ENCODE measurements at regions of chr4 and their contacts with region 1.

Region 1: DNA sequence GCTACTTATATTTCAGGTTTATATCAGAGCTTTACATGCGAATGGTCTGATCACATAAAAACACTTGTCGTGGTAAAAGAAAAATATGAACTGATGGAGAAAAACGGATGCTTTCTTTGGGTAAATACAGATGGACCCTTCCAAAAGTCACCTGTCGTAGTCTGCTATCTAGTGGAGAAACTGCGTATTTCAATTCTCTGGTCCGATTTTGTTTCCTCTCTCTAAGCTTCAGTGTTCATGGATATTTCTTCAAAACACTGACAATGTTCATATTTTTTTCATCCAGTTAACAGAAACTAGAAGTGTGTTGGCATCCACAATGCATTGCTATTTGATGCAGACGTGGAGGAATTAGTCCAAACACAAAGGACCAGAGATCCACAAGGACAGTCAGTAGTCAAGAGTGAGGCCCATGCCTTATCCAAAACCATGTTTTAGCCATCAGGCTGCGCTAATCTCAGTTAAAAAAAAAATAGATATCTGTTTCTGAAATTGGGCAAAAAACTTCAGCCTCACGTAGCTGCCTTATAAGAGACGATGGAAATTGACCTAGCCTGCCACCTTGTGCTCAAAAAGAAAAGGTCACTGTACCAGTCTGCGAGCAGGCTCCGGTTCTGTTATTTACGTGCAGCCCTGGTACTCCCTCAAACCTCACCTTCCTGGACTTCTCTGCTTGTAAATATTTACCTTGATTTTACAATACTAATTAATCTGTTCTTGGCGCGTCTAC is 16.0 kb downstream of the MEPE start:
- DNase-seq: peak; percentile 75

Region 2: GRCh38 chr4:87270144-87270543 is 578.6 kb before region 1 on chr4:
- in situ Hi-C with region 1: loop called (anchors 25 kb)
- DNase-seq: peak; percentile 55

Region 3: DNA sequence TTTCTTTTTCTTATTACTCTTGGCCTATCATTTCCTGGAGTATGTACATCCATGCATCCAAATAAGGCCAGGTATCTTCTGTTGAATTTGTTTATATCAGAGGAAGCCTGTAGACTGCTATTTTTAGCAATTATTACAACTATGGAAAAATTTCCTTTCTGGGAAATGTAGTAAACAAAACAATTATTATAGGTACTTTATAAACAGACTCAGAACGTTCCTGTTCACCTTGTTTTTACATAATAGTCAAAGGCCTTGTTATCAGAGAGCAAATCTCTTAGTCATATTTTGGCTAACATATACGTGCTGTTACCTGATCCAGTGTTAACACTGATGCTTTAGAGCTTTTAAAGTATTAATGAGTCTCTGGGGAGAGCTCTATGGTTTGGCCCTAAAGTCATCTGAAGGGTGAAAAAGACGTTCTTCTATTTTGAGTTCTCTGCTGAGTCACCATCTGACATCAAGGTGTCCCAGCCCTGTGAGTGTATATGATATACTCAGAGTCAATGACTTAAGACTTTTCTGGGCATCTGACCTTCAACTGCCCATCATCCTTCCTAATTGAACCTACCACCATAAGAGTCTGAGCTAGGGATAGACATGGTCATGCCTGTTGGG is 326.9 kb before region 1 on chr4:
- in situ Hi-C with region 1: loop called (anchors 25 kb)
- DNase-seq: no peak

Region 4: DNA sequence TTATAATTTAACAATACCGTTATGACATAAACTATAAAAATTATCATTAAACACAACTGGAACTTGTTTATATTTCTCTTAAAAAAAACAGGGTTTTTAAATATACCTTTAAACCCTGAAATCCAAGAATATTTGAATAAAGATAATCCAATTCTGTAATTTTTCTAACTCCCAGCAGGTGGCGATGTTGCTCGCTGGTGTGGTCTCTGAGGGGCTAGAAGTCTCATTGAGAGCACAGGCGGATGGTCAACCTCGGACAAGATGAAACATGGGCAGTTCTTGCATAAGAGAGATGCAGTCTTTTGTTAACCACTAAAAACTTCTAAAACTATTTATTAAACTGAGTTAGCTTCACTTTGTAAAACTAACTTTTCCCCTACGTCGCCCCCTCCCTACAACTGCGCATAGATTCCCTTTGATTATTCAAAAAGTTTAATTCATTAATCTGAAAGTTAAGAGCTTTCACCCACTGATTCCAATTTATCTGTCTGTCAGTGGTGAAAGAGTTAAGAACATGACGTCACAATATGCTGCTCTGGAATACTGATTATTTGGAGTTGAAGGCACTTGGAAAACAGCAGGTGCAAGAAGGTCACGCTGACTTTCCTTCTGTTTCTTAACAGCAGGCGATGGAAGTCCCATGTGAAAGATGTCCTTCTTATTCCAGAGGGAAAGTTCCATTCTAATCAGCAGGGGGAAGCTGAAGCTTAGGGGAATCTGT is 169.2 kb before region 1 on chr4:
- in situ Hi-C with region 1: loop called (anchors 25 kb)
- DNase-seq: peak; percentile 40

Region 5: DNA sequence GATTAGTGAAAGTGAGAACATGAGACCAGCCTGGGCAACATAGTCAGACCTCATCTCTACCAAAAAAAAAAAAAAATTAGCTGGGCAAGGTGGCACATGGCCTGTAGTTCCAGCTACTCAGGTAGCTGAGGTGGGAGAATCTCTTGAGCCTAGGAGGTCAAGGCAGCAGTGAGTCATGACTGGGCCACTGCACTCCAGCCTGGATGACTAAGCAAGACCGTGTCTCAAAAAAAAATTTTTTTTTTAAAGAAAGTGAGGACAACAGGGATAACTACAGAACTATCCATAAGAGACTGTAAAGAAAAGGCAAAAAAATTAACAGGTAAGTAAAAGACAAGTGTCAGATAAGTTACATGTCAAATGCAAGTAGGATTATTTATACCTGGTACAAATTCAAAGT is 113.2 kb after region 1 on chr4:
- in situ Hi-C with region 1: loop called (anchors 10 kb)
- DNase-seq: no peak

Region 6: DNA sequence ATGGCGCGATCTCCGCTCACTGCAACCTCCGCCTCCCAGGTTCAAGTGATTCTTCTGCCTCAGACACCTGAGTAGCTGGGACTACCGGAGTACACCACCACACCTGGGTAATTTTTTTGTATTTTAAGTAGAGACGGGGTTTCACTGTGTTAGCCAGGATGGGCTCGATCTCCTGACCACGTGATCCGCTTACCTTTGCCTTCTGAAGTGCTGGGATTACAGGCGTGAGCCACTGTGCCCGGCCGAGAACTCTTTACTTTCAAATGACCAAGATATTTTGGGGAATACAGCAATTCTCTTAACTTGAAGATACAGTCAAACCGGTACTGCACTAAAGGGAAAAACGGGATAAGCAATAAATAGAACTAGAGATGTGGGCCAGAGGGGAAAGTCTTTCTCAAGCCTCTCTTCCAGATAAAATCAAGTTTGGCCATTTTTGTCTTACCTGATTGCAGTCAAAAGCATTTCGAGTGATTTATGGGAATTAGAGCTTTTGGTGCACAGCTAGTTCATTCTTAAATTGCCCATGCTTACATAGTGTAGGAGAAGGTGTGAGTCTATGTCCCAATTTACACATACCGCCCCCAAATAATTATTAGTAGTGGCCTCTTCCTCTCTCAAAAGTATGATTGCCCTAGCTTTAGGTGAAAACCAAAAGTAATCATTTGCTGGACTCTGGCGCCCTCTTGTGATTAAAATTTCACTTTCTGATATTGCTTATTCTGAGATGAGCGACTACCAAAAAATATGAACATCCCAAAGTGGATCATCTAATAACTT is 362.9 kb after region 1 on chr4:
- in situ Hi-C with region 1: loop called (anchors 25 kb)
- DNase-seq: peak; percentile 80

Measured in KBM-7 (cell line).